B cell (primary cell): ENCODE measurements at regions of chr1 and their contacts with region 1.

Region 1: GRCh38 chr1:109112652-109113285 is 1.1 kb upstream of the ELAPOR1 start:
- DNase-seq: peak; percentile 91
- ATAC-seq: peak; percentile 69
- H3K4me3 ChIP-seq: peak overlapping the region; percentile 30 to 54 (median 37)
- H3K4me3 Mint-ChIP-seq: peak overlapping the region; percentile 85
- H3K27ac ChIP-seq: peak overlapping the region in 1 of 2 donors; percentile 45
- H3K27ac Mint-ChIP-seq: peak overlapping the region; percentile 75
- H3K4me1 ChIP-seq: peaks cover 25 to 26% of the 10 kb centered on the region in 2 donors
- H3K4me1 Mint-ChIP-seq: peaks cover 27% of the 10 kb centered on the region
- H3K27me3 ChIP-seq: peaks cover 0 to 23% (median 20%) of the 10 kb centered on the region in 4 experiments
- H3K27me3 Mint-ChIP-seq: peaks cover 31% of the 10 kb centered on the region
- CTCF ChIP-seq: peak; percentile 85

Region 2: GRCh38 chr1:108963052-108963686 is 149.6 kb before region 1 on chr1 and contains the start of gene CLCC1:
- CTCF ChIA-PET with region 1: interaction called, 3 read pairs
- POLR2A ChIA-PET with region 1: no interaction called
- intact Hi-C with region 1: loop called (anchors 2 kb)
- DNase-seq: peak; percentile 97
- ATAC-seq: peak; percentile 91
- H3K4me3 ChIP-seq: peak within 1 kb of the TSS; percentile 56 to 94 (median 76)
- H3K4me3 Mint-ChIP-seq: peak within 1 kb of the TSS; percentile 91
- H3K27ac ChIP-seq: peak within 1 kb of the TSS; percentile 86 to 94
- H3K27ac Mint-ChIP-seq: peak within 1 kb of the TSS; percentile 95
- H3K4me1 ChIP-seq: peaks cover 16 to 17% of the 10 kb centered on the region in 2 donors
- H3K4me1 Mint-ChIP-seq: peaks cover 30% of the 10 kb centered on the region
- H3K27me3 ChIP-seq: no peaks in the 10 kb centered on the region
- H3K27me3 Mint-ChIP-seq: no peaks in the 10 kb centered on the region
- CTCF ChIP-seq: no peak
- total RNA-seq, gene CLCC1: 26.9 and 29.5 TPM in 2 replicates

Region 3: DNA sequence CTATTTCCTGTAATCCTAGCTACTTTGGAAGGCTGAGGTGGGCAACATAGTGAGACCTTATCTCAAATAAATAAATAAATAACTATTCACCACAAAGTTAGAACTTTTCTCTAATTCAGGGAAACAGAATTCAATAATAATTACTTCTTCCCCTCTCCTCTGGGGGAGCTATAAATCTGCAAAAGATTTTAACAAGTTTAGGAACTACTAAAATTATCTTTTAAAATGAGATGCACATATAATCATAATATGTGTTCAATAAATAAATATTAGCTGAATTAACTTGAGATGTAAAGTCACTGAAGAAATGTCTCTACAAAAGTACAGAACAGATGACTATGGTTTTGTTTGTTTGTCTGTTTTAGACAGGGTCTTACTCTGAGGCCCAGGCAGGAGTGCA is 84.9 kb before region 1 on chr1:
- CTCF ChIA-PET with region 1: interaction called, 19 read pairs
- POLR2A ChIA-PET with region 1: no interaction called
- intact Hi-C with region 1: no loop called
- DNase-seq: no peak
- ATAC-seq: no peak
- H3K4me3 ChIP-seq: no peak overlapping the region
- H3K4me3 Mint-ChIP-seq: no peak overlapping the region
- H3K27ac ChIP-seq: no peak overlapping the region
- H3K27ac Mint-ChIP-seq: no peak overlapping the region
- H3K4me1 ChIP-seq: no peaks in the 10 kb centered on the region
- H3K4me1 Mint-ChIP-seq: peaks cover 2% of the 10 kb centered on the region
- H3K27me3 ChIP-seq: no peaks in the 10 kb centered on the region
- H3K27me3 Mint-ChIP-seq: no peaks in the 10 kb centered on the region
- CTCF ChIP-seq: peak; percentile 50

Region 4: DNA sequence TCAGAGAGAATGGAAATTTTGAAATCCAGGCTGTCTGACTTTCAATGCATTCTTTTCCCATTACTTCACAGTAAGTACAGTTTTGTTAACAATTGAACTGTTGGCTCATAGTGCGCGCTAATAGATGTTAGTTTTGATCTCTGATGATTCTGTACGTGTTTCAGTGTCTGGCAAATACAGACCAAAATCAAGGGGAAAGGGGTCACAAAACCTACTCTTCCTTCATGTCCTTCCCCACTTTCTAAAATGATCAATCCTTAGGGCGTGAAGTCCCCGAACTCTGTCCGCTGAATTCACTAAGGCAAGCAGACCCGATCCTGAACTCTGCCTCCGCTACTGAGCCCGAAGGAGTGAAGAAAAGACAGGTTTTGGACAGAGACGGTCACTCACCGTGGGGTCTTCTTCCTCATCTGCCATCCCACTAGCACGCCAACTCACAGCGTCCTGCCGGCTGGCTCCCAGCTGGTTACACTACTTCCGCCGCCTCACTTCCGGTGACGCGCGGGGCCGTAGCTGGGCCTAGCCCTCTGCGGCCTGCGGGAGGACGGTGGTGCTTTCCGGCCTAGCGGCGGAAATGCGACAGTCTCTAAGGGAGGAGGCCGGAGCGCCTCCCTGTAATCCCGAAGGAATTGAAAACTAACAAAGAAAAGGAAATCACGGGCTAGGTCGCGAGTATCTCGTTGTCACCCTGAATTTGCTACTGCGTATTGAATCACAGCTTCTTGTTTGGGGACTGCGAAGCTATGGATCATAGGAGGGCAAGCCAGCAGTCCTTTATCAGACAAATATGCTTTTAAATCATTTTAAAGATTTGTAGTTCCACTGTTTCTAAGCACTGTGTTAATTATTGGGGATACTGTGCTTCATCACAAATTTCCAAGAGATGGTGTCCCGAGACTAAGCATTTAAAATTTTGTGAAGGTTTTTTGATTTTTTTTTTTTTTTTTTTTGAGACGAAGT is 37.0 kb before region 1 on chr1 and contains the start of gene TAF13:
- CTCF ChIA-PET with region 1: interaction called, 15 read pairs
- POLR2A ChIA-PET with region 1: interaction called, 5 read pairs
- intact Hi-C with region 1: loop called (anchors 1 kb)
- DNase-seq: peak; percentile 95
- ATAC-seq: peak; percentile 99
- H3K4me3 ChIP-seq: peak within 1 kb of the TSS; percentile 63 to 98 (median 92)
- H3K4me3 Mint-ChIP-seq: peak within 1 kb of the TSS; percentile 99
- H3K27ac ChIP-seq: peak within 1 kb of the TSS; percentile 95 to 98
- H3K27ac Mint-ChIP-seq: peak within 1 kb of the TSS; percentile 97
- H3K4me1 ChIP-seq: peaks cover 12 to 13% of the 10 kb centered on the region in 2 donors
- H3K4me1 Mint-ChIP-seq: peaks cover 17% of the 10 kb centered on the region
- H3K27me3 ChIP-seq: no peaks in the 10 kb centered on the region
- H3K27me3 Mint-ChIP-seq: no peaks in the 10 kb centered on the region
- CTCF ChIP-seq: no peak
- total RNA-seq, gene TAF13: 12.9 and 14.3 TPM in 2 replicates

Region 5: DNA sequence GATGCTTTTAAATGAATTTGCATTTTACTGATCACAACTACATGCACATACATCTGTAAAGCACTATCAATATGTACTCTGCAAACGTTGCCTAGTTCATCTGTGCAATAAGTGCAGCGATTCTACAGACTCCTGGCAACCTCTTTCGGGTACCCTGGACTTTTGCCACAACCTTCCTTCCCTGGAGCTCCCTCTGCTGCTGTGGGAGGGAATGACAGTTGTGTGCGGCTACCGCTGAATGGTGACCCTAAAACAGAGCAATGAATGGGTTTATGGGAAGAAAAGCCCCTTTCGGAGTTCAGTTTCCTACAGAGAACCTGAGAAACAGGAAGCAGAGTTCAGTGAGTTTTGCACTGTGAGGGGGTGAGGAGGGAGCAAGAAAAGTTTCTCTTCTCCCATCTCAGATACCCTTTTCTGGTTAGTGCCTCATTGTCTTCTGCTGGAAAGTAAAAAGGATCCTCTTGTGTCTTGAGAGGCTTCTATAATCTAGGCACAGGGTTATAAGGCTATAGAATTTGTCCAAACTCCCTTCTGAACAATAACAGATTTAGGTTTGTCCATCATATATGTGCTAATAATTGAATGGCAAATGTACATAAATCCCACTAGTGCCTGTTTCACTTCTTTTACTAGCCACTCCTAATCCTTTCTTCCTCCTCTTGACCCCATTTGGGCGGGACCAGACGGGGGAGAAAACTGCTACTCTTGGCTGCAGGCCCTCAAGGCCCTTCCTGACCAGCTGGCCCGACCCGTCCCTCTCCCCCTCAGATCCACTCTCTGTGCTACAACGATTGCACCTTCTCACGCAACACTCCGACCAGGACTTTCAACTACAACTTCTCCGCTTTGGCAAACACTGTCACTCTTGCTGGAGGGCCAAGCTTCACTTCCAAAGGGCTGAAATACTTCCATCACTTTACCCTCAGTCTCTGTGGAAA is 81.2 kb after region 1 on chr1:
- CTCF ChIA-PET with region 1: interaction called, 8 read pairs
- POLR2A ChIA-PET with region 1: no interaction called
- intact Hi-C with region 1: loop called (anchors 5 kb)
- DNase-seq: peak; percentile 75
- ATAC-seq: peak; percentile 94
- H3K4me3 ChIP-seq: no peak overlapping the region
- H3K4me3 Mint-ChIP-seq: no peak overlapping the region
- H3K27ac ChIP-seq: no peak overlapping the region
- H3K27ac Mint-ChIP-seq: peak overlapping the region; percentile 10
- H3K4me1 ChIP-seq: peaks cover 9 to 10% of the 10 kb centered on the region in 2 donors
- H3K4me1 Mint-ChIP-seq: peaks cover 10% of the 10 kb centered on the region
- H3K27me3 ChIP-seq: no peaks in the 10 kb centered on the region
- H3K27me3 Mint-ChIP-seq: peaks cover 6% of the 10 kb centered on the region
- CTCF ChIP-seq: peak; percentile 80

Region 6: DNA sequence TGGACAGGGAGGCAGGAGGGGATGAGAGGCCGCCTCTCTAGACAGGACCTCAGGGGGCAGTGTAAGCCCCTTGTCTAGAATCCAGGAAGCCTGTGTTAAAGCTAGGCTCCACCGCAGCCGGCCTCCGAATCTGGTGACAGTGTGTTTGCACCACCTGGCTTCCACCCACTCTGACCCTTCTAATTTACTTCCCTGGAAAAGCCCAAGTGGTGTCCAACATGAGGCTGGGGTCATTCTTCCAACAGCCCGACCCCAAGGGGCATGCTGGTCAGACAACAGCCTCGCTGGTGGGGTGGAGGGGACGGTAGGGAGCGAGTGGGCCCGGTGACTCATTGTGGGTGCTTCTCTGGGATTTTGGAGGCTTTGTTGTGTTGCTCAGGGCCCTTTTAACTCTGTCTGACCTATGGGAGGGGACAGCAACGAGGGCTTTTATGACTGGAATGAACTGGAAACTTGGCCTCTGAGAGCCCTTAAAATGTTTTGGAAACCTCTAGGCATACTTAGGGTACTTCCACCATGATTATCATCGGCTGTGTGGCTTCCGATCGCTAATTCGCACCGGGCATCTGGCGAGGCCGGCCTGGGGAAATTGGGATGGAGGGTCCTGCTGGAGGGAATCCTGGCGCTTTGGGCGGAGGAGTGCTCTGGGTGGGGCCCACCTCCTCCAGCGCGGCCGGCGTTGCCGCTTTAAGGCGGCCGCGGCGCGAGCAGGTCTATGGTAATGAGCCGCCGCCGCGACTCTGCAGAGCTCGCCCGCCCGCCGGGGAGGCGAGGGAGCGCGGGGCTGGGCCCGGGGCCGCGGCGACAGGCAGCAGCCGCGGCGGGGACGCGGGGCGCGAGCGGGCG is 136.3 kb after region 1 on chr1 and contains the start of gene CELSR2:
- CTCF ChIA-PET with region 1: no interaction called
- POLR2A ChIA-PET with region 1: no interaction called
- intact Hi-C with region 1: no loop called
- DNase-seq: peak; percentile 70
- ATAC-seq: peak; percentile 88
- H3K4me3 ChIP-seq: peak within 1 kb of the TSS in 3 of 5 experiments; percentile 37 to 54 (median 46)
- H3K4me3 Mint-ChIP-seq: peak within 1 kb of the TSS; percentile 78
- H3K27ac ChIP-seq: no peak within 1 kb of the TSS
- H3K27ac Mint-ChIP-seq: no peak within 1 kb of the TSS
- H3K4me1 ChIP-seq: peaks cover 11 to 22% of the 10 kb centered on the region in 2 donors
- H3K4me1 Mint-ChIP-seq: peaks cover 11% of the 10 kb centered on the region
- H3K27me3 ChIP-seq: peaks cover 0 to 45% (median 14%) of the 10 kb centered on the region in 4 experiments
- H3K27me3 Mint-ChIP-seq: peaks cover 17% of the 10 kb centered on the region
- CTCF ChIP-seq: no peak
- total RNA-seq, gene CELSR2: 2.7 and 2.9 TPM in 2 replicates

Region 7: DNA sequence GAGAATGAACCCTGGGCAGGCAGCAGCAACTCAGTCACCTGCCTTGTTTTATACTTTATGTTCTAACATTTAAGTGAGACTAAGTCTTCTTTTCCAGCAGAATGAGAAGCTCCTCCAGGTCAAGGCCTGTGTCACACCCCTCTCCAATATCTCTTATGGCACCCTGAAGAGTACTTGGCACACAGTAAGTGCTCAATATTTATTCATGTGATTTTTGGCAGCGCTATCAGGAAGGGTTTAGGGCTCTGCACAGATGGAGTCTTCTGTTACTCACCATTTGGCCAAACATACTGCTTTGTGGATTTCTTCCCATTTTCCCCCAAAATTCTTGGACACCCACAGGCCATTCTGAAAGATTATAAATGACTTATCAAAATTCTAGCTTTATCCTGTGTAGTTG is 237.9 kb after region 1 on chr1:
- CTCF ChIA-PET with region 1: no interaction called
- POLR2A ChIA-PET with region 1: no interaction called
- intact Hi-C with region 1: no loop called
- DNase-seq: no peak
- ATAC-seq: no peak
- H3K4me3 ChIP-seq: no peak overlapping the region
- H3K4me3 Mint-ChIP-seq: no peak overlapping the region
- H3K27ac ChIP-seq: no peak overlapping the region
- H3K27ac Mint-ChIP-seq: no peak overlapping the region
- H3K4me1 ChIP-seq: no peaks in the 10 kb centered on the region
- H3K4me1 Mint-ChIP-seq: no peaks in the 10 kb centered on the region
- H3K27me3 ChIP-seq: peaks cover 0 to 7% (median 0%) of the 10 kb centered on the region in 4 experiments
- H3K27me3 Mint-ChIP-seq: peaks cover 31% of the 10 kb centered on the region
- CTCF ChIP-seq: no peak

Region 8: GRCh38 chr1:109548321-109549267 is 435.8 kb after region 1 on chr1 and contains the start of gene GNAI3:
- CTCF ChIA-PET with region 1: no interaction called
- POLR2A ChIA-PET with region 1: no interaction called
- intact Hi-C with region 1: no loop called
- DNase-seq: peak; percentile 97
- ATAC-seq: peak; percentile 87
- H3K4me3 ChIP-seq: peak within 1 kb of the TSS; percentile 84 to 95 (median 92)
- H3K4me3 Mint-ChIP-seq: peak within 1 kb of the TSS; percentile 99
- H3K27ac ChIP-seq: peak within 1 kb of the TSS; percentile 93 to 96
- H3K27ac Mint-ChIP-seq: peak within 1 kb of the TSS; percentile 99
- H3K4me1 ChIP-seq: peaks cover 25 to 33% of the 10 kb centered on the region in 2 donors
- H3K4me1 Mint-ChIP-seq: peaks cover 55% of the 10 kb centered on the region
- H3K27me3 ChIP-seq: no peaks in the 10 kb centered on the region
- H3K27me3 Mint-ChIP-seq: no peaks in the 10 kb centered on the region
- CTCF ChIP-seq: no peak
- total RNA-seq, gene GNAI3: 8.5 and 8.8 TPM in 2 replicates